GM23248 (cell line): ENCODE measurements at regions of chr11 and their contacts with region 1.

Region 1: GRCh38 chr11:57131080-57131790 is 50.5 kb upstream of the LRRC55 start:
- DNase-seq: peak; percentile 55
- H3K4me3 ChIP-seq: no peak overlapping the region
- H3K27ac ChIP-seq: no peak overlapping the region
- H3K4me1 ChIP-seq: no peaks in the 10 kb centered on the region
- H3K27me3 ChIP-seq: peaks cover 51% of the 10 kb centered on the region

Region 2: GRCh38 chr11:57186349-57186748 is 55.1 kb after region 1 on chr11:
- in situ Hi-C with region 1: loop called (anchors 5 kb)
- DNase-seq: no peak
- H3K4me3 ChIP-seq: no peak overlapping the region
- H3K27ac ChIP-seq: no peak overlapping the region
- H3K4me1 ChIP-seq: no peaks in the 10 kb centered on the region
- H3K27me3 ChIP-seq: peaks cover 12% of the 10 kb centered on the region

Region 3: DNA sequence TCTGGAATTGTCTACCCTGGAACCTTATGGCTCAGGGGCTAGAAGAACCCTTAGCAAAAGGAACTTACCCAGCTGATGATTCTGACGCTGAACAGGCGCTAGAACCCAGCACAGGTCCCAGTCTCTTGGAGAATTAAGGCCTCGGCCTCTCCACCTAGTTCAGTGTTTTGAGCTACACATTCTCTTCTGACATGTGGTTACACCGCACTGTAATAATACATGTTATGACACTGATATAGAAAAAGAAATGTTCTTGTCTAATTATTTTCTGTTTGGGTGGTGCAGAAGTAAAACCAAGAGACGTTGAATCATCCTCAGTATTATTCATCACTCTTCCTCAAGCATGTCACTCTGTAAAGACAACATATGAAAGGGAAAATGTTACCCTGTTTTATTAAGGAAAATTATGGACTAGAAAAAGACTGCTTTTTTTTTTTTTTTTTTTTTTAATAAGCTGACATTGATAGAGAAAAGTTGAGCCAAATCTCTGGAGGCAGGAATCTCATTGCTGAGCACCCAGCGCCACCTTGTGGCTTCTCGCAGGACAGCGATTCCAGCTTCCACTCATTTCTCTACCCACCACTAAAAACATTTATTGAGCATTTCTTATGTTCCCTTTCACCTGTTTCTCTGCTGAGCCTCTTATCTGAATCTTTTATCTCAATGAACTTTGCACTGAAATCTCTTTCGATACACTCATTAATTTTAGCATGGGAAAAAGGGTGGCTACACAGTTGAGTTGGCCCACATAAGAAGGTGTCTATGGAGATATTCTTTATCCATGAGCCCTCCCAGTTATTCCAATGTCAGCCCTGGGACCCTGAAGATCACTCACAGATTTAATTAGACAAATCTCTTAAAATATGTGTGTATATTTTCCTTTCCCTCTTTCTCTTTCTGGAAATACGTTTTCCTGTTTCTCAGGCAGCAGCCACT is 118.4 kb after region 1 on chr11:
- in situ Hi-C with region 1: loop called (anchors 10 kb)
- DNase-seq: peak; percentile 76
- H3K4me3 ChIP-seq: peak overlapping the region; percentile 51
- H3K27ac ChIP-seq: no peak overlapping the region
- H3K4me1 ChIP-seq: peaks cover 10% of the 10 kb centered on the region; the same call in 1 of the 2 replicates
- H3K27me3 ChIP-seq: no peaks in the 10 kb centered on the region

Region 4: GRCh38 chr11:57303990-57304579 is 172.8 kb after region 1 on chr11:
- in situ Hi-C with region 1: no loop called
- DNase-seq: peak; percentile 80
- H3K4me3 ChIP-seq: peak overlapping the region; percentile 17
- H3K27ac ChIP-seq: peak overlapping the region; percentile 55
- H3K4me1 ChIP-seq: peaks cover 34% of the 10 kb centered on the region
- H3K27me3 ChIP-seq: no peaks in the 10 kb centered on the region